Dendritic cell treated with granulocyte-macrophage colony-stimulating factor and Interleukin-4, amounts not matched to agents 40 ng/mL and 50 ng/mL, for 4 days (primary cell): ENCODE measurements at regions of chr2 and their contacts with region 1.

Region 1: GRCh38 chr2:158179660-158180059 is 78.0 kb downstream of the UPP2 start:
- H3K4me3 Mint-ChIP-seq: no peak overlapping the region
- H3K27ac Mint-ChIP-seq: no peak overlapping the region
- H3K4me1 Mint-ChIP-seq: no peaks in the 10 kb centered on the region
- H3K27me3 Mint-ChIP-seq: no peaks in the 10 kb centered on the region

Region 2: DNA sequence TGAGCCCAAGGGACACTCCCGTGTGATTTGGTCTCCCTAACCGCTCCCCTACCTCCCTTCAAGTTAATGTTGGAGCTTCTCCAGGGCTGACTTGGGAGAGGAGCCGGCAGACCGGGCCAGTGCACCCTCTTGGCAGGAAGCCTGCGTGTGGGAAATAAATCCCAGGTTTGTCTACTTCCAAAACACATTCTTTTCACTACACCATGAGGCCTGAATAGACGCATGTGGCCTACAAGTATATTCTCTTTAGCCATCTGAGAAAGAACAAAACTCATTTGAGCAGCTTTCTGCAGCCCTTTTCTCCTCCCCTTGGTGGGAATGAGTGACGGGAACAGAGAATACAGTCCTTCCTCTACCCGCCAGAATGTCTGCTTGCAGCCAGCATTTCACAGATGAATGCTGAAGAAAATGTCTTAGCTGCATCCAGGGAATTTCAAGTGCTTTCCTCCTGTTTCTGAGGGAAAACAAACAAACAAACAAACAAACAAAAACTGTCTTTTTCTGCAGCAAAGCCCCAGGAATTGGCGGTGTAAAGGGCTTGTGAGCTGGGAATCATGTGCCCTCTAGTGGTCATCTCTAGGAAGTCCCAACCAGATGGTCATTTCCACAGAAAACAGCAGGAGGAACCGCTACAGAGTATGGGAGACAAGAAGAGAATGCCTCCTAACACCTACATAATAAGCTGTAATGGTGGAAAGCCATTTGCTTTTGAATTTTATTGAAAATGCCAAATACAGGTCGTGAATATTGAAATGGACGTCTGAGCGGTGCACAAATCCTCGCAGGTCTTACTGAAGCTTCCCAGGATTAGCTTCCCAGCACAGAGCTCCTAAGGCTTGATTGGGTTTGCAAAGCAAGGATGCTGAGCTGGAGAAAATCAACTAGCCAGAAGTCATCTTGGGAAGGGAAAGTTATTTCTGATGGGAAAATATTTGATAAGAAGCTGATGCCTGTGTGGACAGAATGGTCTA is 574.3 kb after region 1 on chr2:
- intact Hi-C with region 1: loop called (anchors 5 kb)
- H3K4me3 Mint-ChIP-seq: no peak overlapping the region
- H3K27ac Mint-ChIP-seq: no peak overlapping the region
- H3K4me1 Mint-ChIP-seq: no peaks in the 10 kb centered on the region
- H3K27me3 Mint-ChIP-seq: no peaks in the 10 kb centered on the region